T-cell (primary cell): ENCODE measurements at regions of chr15 and their contacts with region 1.

Region 1: DNA sequence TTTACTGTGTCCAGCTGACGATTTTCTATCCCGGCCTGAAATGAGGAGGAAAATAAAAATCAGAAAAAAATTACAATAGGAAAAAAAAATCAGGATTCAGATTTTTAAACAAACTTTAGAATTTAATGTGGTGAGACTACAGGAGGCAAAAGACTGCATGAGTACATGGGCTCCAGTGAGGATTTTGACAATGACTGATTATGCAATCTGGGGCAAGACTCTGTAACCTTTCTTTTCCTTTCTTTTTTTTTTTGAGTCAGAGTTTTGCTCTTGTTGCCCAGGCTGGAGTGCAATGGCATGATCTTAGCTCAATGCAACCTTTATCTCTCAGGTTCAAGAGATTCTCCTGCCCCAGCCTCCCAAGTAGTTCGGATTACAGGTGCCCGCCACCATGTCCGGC is 29.9 kb downstream of the SPG11 start:
- DNase-seq: no peak
- ATAC-seq: no peak
- H3K4me3 ChIP-seq: no peak overlapping the region
- H3K4me3 Mint-ChIP-seq: peak overlapping the region in 1 of 3 donors; percentile 34
- H3K27ac ChIP-seq: no peak overlapping the region
- H3K27ac Mint-ChIP-seq: peak overlapping the region; percentile 83 to 84
- H3K4me1 ChIP-seq: no peaks in the 10 kb centered on the region
- H3K4me1 Mint-ChIP-seq: peaks cover 0 to 13% (median 10%) of the 10 kb centered on the region in 3 donors
- H3K27me3 ChIP-seq: no peaks in the 10 kb centered on the region
- H3K27me3 Mint-ChIP-seq: no peaks in the 10 kb centered on the region

Region 2: DNA sequence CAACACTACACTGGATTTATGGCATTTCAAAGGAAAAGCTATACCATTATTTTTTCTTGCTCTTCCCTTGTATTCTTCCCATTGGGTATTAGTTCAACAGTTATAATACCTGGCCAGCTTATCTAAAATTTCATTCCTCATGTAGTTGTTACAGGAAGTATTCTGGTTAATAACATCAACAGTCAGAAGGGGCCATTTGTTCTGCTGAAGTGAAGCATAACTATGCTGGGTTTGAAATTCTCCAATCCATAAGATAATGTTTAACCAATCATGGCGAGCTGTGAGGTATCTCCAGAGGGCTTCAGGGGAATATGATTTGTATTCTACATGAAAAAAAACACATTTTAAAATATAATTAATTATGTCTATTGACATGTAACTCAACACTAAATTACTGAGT is 13.5 kb before region 1 on chr15:
- CTCF ChIA-PET with region 1: interaction called, 4 to 10 read pairs
- POLR2A ChIA-PET with region 1: no interaction called
- DNase-seq: no peak
- ATAC-seq: no peak
- H3K4me3 ChIP-seq: no peak overlapping the region
- H3K4me3 Mint-ChIP-seq: no peak overlapping the region
- H3K27ac ChIP-seq: no peak overlapping the region
- H3K27ac Mint-ChIP-seq: no peak overlapping the region
- H3K4me1 ChIP-seq: no peaks in the 10 kb centered on the region
- H3K4me1 Mint-ChIP-seq: peaks cover 0 to under 1% (median 0%) of the 10 kb centered on the region in 3 donors
- H3K27me3 ChIP-seq: no peaks in the 10 kb centered on the region
- H3K27me3 Mint-ChIP-seq: no peaks in the 10 kb centered on the region

Region 3: DNA sequence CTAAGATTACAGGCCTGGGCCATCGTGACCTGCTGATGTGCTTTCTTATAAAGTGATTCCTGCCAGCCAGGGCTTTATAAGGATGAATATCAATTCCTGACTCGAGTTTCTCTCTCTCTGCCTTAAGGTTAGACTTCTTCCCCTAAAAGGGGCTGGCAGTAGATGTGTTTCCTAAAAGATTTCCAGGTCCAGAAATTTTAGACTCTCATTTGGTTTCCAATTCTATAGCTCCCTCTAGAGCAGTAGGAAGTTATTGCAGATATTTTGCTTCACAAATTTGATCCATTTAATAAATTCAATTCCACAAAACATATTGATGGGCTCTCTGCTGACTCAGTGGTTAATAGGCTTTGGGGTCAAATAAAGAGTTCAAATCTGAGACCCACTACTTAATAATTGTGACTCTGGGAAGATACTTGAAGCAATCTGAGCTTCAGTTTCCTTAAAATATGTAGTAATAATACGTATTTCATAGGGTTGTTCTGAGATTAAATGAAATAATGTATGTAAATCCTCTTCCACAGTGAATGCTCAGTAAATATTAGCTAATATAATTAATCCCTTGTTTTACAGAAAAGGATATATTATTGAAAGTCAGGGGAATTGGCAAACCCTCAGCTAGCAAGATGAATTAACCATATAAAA is 104.9 kb after region 1 on chr15:
- CTCF ChIA-PET with region 1: interaction called, 5 to 6 read pairs
- POLR2A ChIA-PET with region 1: interaction called in 1 of 2 experiments, 10 read pairs
- DNase-seq: peak in 1 of 35 experiments; percentile 74
- ATAC-seq: no peak
- H3K4me3 ChIP-seq: no peak overlapping the region
- H3K4me3 Mint-ChIP-seq: peak overlapping the region in 2 of 3 donors; percentile 14 to 51
- H3K27ac ChIP-seq: peak overlapping the region; percentile 89
- H3K27ac Mint-ChIP-seq: peak overlapping the region; percentile 80 to 84
- H3K4me1 ChIP-seq: peaks cover 7 to 43% of the 10 kb centered on the region in 2 experiments
- H3K4me1 Mint-ChIP-seq: peaks cover 55 to 59% (median 58%) of the 10 kb centered on the region in 3 donors
- H3K27me3 ChIP-seq: no peaks in the 10 kb centered on the region
- H3K27me3 Mint-ChIP-seq: no peaks in the 10 kb centered on the region